Left lung (tissue), 14 donors: ENCODE measurements at regions of chr3 and their contacts with region 1.

Region 1: GRCh38 chr3:112984485-112984884 is 6.3 kb upstream of the GTPBP8 start:
- DNase-seq: no peak
- ATAC-seq: no peak
- H3K4me3 ChIP-seq: no peak overlapping the region
- H3K27ac ChIP-seq: no peak overlapping the region
- H3K4me1 ChIP-seq: peaks cover 0 to 6% of the 10 kb centered on the region in 2 donors
- H3K27me3 ChIP-seq: no peaks in the 10 kb centered on the region
- CTCF ChIP-seq: no peak

Region 2: DNA sequence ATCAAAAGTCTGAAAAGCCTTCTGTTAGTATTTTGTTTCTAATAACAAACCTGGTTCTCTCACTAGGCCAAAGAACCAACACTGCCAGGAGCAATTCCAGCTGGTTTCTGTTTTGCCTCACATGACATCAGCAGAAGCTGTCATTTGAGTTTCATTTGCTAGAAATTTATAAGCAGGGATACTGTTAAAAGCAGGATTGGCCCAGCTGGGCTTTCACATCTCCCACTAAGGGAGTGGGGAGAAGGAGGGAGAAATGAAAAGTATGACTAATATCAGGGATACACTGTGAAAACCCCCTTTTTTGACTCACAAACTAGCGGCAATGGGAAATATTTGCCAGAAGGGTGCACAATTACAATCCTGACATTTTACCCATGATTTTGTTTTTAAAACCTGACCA is 348.8 kb before region 1 on chr3:
- intact Hi-C with region 1: loop called in 1 of 2 experiments (anchors 10 kb)
- DNase-seq: peak in 2 of 4 donors; percentile 77 to 87
- ATAC-seq: peak; percentile 51
- H3K4me3 ChIP-seq: peak overlapping the region in 1 of 2 donors; percentile 13
- H3K27ac ChIP-seq: peak overlapping the region; percentile 23 to 39
- H3K4me1 ChIP-seq: peaks cover 3 to 11% of the 10 kb centered on the region in 2 donors
- H3K27me3 ChIP-seq: no peaks in the 10 kb centered on the region
- CTCF ChIP-seq: no peak

Region 3: GRCh38 chr3:112858410-112859069 is 125.9 kb before region 1 on chr3:
- intact Hi-C with region 1: no loop called
- DNase-seq: no peak
- ATAC-seq: peak; percentile 73
- H3K4me3 ChIP-seq: no peak overlapping the region
- H3K27ac ChIP-seq: peak overlapping the region in 1 of 2 donors; percentile 83
- H3K4me1 ChIP-seq: peaks cover 0 to 21% of the 10 kb centered on the region in 2 donors
- H3K27me3 ChIP-seq: no peaks in the 10 kb centered on the region
- CTCF ChIP-seq: no peak